ENCODE measurements at regions of chr17 and their contacts with region 1.

Region 1: GRCh38 chr17:55348749-55349354 is 72.8 kb downstream of the MMD start:
- DNase-seq: peak; percentile 49
- H3K4me3 Mint-ChIP-seq: no peak overlapping the region
- H3K27ac Mint-ChIP-seq: no peak overlapping the region
- H3K4me1 Mint-ChIP-seq: peaks cover 48% of the 10 kb centered on the region
- H3K27me3 Mint-ChIP-seq: no peaks in the 10 kb centered on the region

Region 2: GRCh38 chr17:54992797-54993639 is 355.8 kb before region 1 on chr17:
- CTCF ChIA-PET with region 1: interaction called, 60 read pairs
- DNase-seq: no peak
- H3K4me3 Mint-ChIP-seq: no peak overlapping the region
- H3K27ac Mint-ChIP-seq: no peak overlapping the region
- H3K4me1 Mint-ChIP-seq: no peaks in the 10 kb centered on the region
- H3K27me3 Mint-ChIP-seq: no peaks in the 10 kb centered on the region

Region 3: GRCh38 chr17:55053855-55054254 is 295.0 kb before region 1 on chr17:
- CTCF ChIA-PET with region 1: interaction called, 10 read pairs
- DNase-seq: no peak
- H3K4me3 Mint-ChIP-seq: no peak overlapping the region
- H3K27ac Mint-ChIP-seq: no peak overlapping the region
- H3K4me1 Mint-ChIP-seq: no peaks in the 10 kb centered on the region
- H3K27me3 Mint-ChIP-seq: no peaks in the 10 kb centered on the region

Region 4: DNA sequence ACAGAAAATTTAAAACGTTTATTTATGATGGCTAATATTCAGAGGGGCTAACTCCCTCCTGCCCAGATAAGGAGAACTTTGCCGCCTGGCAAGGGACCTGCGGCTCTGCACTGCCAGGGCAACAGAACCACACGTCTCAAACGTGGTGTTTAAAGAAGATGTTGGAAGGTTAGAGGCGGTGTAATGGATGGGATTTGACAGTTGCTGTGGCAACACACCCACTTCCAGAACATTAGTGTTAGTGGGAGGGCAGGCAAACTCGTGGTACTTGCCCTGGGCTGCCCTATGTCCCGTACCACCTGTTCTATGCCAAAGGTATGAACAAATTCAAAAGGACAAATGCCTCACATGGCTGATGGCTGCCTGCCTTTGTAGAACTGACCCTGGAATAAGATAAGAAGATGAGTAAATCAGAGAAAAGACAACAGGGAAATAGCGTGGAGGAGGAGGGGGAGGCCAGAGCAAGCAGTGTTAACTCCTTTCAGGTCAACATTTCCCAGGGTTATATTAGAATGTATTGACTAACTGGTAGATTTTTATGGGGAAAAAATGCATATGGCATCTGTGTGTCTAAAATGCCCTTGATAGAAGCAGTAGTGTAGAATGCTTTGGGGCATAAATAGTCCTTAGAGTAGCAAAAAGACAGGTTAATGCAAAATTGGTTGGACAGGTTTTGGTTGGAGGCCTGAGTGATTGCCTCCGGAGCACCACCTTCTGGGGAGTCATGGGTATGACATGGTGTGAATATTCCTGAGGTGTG is 53.3 kb before region 1 on chr17:
- CTCF ChIA-PET with region 1: interaction called, 10 read pairs
- DNase-seq: peak; percentile 60
- H3K4me3 Mint-ChIP-seq: no peak overlapping the region
- H3K27ac Mint-ChIP-seq: no peak overlapping the region
- H3K4me1 Mint-ChIP-seq: no peaks in the 10 kb centered on the region
- H3K27me3 Mint-ChIP-seq: peaks cover 17% of the 10 kb centered on the region

Region 5: DNA sequence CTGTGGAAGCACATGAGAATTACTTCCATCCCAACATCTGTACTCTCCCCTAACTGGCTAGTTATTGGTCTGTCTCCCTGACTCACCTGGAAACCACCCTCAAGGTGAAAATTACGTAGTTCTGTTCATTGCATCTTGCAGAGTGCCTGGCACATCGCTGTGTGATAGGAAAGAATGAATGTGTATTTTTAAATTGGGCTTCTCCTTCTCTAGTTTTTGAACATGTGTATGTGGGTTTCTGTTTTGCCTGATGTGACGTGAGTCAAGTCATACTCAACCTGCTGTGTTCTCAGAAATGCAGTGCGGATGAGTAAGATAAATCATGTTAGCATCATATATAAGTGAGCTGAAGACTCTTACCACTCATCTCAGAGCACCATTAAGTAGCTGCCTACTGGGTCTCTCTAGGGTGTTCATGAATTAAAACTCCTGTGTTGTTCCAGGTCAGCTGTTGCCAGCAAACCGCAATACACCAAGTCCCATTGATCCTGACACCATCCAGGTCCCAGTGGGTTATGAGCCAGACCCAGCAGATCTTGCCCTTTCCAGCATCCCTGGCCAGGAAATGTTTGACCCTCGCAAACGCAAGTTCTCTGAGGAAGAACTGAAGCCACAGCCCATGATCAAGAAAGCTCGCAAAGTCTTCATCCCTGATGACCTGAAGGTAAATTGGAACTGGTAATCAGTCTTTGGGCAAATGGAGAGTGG is 33.9 kb before region 1 on chr17:
- CTCF ChIA-PET with region 1: interaction called, 14 read pairs
- DNase-seq: no peak
- H3K4me3 Mint-ChIP-seq: no peak overlapping the region
- H3K27ac Mint-ChIP-seq: no peak overlapping the region
- H3K4me1 Mint-ChIP-seq: peaks cover 3% of the 10 kb centered on the region
- H3K27me3 Mint-ChIP-seq: peaks cover 25% of the 10 kb centered on the region

Region 6: DNA sequence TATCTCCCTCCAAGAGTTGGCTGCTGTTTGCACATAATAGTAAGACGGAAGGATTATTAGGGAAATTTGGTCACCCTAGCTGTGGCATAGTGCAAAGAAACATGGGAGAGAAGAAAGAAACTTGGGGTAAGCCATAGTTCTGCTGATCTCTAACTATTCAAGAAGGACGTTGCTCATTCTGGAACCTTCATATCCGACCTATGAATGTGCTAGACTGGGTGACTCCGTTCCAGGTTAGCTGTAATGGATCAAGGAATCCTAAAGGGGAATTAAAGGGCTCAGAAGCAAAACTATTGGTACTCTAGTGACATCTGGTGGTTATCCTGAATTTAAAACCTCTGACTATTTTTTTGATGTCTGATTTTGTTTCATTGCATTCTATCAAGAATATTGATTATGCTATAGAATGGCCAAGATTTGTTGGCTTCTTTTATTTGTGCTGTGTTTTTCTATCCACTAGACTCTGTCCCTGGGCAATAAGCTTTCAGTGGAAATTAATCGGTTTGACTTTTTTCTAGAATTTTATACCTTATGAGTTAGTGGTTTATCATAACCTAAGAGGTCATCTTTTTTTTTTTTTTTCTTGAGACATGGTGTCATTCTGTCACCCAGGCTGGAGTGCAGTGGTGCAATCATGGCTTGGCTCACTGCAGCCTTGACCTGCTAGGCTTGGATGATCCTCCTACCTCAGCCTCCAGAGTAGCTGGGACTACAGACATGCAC is 421.5 kb after region 1 on chr17:
- CTCF ChIA-PET with region 1: no interaction called
- DNase-seq: no peak
- H3K4me3 Mint-ChIP-seq: no peak overlapping the region
- H3K27ac Mint-ChIP-seq: no peak overlapping the region
- H3K4me1 Mint-ChIP-seq: no peaks in the 10 kb centered on the region
- H3K27me3 Mint-ChIP-seq: no peaks in the 10 kb centered on the region

Measured in activated naive CD4-positive, alpha-beta T cell treated with anti-CD3 and anti-CD28 coated beads, Interleukin-2, amount 10 ng/mL, durations not matched to agents 7 days and 5 days (primary cell).